Prostate gland (tissue), 2 donors: ENCODE measurements at regions of chr16 and their contacts with region 1.

Region 1: DNA sequence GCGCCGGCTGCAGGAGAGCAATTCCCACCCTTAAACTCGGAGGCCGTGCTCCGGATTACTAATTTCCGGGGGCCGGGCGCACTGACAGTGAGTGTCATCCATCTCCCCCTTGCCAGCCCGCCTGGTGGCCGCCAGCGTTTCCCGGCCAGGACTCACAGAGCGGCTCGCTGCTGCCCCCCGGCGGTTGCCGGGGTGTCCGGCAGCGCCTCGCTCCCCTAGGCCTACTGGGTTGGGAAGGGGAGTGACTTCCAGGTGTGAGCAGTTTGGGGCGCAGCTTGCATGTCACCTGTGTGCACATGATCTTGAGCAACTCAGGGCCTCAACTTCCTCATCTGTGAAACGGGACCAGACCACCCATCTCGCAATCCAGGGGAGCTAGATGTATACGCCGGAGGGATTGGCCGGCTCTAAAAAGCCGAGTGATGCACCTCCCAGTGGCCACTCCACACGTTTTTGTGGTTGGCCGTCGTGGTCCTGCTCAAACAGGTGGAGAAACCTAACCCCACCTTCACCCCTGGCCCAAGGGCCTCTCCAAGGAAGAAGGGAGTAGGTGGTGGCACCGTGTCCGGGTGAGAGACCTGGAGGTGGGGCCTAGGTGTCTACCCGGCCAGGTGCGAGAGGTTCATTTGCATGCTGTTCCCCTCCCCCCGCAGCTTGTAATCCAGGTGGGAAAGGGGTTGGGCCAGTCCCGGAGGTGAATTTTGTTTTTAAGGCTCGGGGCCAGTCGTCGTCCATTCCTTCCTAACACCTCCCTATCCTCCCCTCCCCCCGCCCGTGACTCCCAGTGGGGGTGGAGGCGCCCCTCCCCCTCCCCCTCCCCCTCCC is 2.4 kb upstream of the GSE1 start:
- DNase-seq: peak; percentile 83
- H3K4me3 ChIP-seq: peak overlapping the region; percentile 58 to 68
- H3K27ac ChIP-seq: peak overlapping the region; percentile 95
- H3K4me1 ChIP-seq: peaks cover 41% of the 10 kb centered on the region
- H3K27me3 ChIP-seq: no peaks in the 10 kb centered on the region
- CTCF ChIP-seq: peak; percentile 99
- POLR2A ChIP-seq: no peak

Region 2: DNA sequence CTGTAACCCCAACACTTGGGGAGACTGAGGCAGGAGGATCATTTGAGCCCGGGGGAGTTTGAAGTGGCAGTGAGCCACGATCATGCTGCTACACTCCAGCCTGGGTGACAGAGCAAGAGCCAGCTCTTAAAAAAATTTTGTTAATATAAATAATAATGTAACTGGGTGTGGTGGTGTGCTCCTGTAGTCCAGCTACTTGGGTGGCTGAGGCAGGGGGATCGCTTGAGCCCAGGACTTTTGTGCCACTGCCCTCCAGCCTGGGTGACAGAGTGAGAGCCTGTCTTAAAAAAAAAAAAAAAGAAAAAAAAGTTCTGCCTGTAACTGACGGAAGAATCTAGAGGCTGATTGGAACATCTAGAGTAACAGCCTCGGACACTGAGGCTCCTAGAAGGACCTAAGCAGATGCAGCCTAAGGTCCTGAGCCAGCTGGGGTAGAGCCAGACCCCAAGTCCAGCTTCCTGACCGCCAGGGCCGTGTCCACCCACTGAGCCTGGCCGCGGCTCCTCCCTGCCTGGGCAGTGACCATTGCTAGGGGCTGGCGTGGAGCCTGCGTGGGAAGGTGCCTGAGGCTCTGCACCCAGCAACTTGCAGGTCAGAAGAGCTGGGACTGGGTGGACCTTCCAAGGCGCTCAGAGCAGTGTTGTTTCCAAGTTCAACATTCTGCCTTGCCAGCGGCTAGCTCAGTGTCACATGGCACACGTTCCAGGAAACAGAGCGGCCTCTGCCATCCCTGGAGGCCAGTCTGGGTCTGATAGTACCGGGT is 289.0 kb before region 1 on chr16:
- intact Hi-C with region 1: loop called (anchors 5 kb)
- DNase-seq: peak; percentile 87
- H3K4me3 ChIP-seq: no peak overlapping the region
- H3K27ac ChIP-seq: peak overlapping the region; percentile 77 to 84
- H3K4me1 ChIP-seq: peaks cover 11% of the 10 kb centered on the region
- H3K27me3 ChIP-seq: no peaks in the 10 kb centered on the region
- CTCF ChIP-seq: no peak
- POLR2A ChIP-seq: no peak

Region 3: DNA sequence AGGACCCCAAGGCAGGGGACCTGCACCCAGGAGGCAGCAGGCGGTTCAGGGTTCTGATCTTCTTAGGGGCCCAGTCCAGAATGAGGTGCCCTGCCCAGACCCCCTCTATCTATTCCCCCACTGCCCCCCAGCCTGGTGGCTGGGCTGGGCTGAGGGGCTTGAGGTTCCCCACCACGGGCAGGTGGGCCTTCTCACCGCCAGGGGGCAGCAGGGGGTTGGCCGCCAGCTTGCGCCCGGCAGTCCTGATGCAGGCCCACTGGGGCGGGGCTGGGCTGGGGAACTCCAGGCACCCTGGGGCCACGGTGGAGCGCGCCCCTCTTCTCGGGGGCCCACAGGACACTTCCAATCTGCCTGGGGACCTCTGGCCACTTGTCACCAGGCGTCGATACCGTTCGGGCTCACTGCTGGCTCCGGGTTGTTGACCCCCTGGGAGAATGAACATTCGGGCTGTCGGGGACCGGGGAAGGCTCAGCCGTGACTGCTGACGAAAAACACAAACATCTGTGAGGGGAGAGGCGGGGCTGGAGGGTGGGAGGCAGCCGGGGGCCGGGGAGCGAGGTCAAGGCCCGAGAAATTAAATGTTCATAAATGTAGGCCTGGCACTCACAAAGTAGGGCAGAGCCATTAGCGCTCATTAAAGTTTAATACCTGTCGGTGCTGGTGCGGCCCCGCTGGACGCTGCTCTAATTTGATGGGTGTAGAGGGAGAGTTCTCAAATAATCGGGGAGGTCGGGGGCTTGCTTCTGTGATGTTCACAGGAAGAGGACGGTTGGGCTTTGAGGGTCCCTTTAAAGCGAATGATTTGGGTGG is 216.8 kb before region 1 on chr16:
- intact Hi-C with region 1: loop called (anchors 10 kb)
- DNase-seq: no peak
- H3K4me3 ChIP-seq: no peak overlapping the region
- H3K27ac ChIP-seq: peak overlapping the region in 1 of 2 donors; percentile 22
- H3K4me1 ChIP-seq: peaks cover 8% of the 10 kb centered on the region
- H3K27me3 ChIP-seq: no peaks in the 10 kb centered on the region
- CTCF ChIP-seq: peak; percentile 56 to 70 (median 59)
- POLR2A ChIP-seq: no peak

Region 4: GRCh38 chr16:85420501-85421337 is 190.0 kb before region 1 on chr16:
- intact Hi-C with region 1: loop called (anchors 2 kb)
- DNase-seq: no peak
- H3K4me3 ChIP-seq: no peak overlapping the region
- H3K27ac ChIP-seq: no peak overlapping the region
- H3K4me1 ChIP-seq: peaks cover 2% of the 10 kb centered on the region
- H3K27me3 ChIP-seq: no peaks in the 10 kb centered on the region
- CTCF ChIP-seq: peak; percentile 83 to 97 (median 94)
- POLR2A ChIP-seq: no peak

Region 5: DNA sequence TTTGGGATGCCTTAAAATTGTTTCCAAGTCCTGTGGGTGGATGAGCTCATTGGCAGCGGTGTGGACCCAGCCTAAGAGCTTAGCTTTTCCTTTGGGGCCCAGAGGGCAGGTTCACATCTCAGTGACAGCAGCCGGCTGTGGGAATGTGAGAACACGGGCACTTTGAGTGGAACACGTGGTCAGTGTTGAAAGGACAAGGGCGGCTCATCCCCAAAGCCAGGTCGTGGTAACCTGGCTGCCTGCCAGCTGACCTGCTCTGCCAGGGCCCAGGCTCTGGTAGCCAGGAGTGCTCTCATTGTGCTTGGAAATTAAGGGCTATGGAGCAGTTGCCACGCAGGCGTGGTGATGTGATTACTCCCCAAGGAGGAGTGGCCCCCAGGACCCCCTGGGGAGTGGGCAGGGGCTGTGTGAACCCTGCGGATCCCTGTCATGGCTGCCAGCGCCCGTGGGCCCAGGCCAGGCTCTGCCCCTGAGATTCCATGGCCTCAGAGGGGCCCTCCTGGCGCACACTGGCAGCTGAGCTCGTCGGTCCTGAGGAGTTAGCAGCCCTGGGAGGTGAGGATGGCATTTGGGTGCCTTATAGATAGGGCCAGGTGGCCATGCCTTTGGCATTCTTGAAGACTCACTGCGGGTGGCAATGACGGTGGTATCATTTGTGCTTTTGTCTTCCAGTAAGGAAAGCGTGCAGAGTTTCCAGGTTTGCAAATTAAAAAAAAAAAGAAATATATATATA is 144.6 kb before region 1 on chr16:
- intact Hi-C with region 1: loop called (anchors 5 kb)
- DNase-seq: no peak
- H3K4me3 ChIP-seq: no peak overlapping the region
- H3K27ac ChIP-seq: peak overlapping the region in 1 of 2 donors; percentile 23
- H3K4me1 ChIP-seq: peaks cover 3% of the 10 kb centered on the region
- H3K27me3 ChIP-seq: no peaks in the 10 kb centered on the region
- CTCF ChIP-seq: no peak
- POLR2A ChIP-seq: no peak

Region 6: DNA sequence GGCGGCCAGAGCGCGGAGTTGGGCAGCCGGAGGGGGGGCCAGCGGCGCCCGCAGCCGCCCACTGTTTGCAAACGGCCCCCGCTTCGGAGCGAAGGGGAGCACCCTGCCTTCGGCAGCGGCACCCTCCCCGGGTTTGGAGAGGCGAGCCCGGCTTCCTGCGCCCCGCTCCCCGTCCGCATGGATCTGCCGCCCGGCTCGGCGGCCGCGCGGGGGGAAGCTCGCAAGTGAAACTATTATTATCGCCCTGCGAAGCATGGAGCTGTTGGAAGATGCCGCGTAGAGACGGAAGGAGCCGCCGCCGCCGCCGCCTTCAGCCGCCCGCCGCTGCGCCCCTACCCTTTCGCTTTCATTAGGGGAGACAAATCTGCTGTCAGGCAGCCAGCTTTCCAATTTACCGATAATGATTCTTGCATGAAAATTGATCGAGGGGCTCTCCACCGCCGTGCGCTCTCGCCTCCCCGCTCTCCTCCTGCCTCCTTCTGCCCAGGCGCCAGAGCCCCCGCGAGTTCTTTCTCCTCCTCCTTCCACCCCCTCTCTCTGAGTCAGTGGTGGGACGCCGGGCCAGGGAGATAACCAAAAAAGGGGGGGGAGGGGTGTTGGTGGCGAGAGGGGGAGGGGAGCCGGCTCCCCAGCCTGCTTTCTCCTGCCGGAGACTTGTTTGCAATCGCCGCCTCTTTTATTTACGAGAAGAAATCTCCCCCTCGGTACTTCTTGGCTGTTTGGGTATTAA is 55.7 kb before region 1 on chr16:
- intact Hi-C with region 1: loop called (anchors 5 kb)
- DNase-seq: peak; percentile 38
- H3K4me3 ChIP-seq: peak overlapping the region; percentile 60 to 66
- H3K27ac ChIP-seq: peak overlapping the region; percentile 81 to 83
- H3K4me1 ChIP-seq: peaks cover 18% of the 10 kb centered on the region
- H3K27me3 ChIP-seq: no peaks in the 10 kb centered on the region
- CTCF ChIP-seq: no peak
- POLR2A ChIP-seq: peak; percentile 32

Region 7: DNA sequence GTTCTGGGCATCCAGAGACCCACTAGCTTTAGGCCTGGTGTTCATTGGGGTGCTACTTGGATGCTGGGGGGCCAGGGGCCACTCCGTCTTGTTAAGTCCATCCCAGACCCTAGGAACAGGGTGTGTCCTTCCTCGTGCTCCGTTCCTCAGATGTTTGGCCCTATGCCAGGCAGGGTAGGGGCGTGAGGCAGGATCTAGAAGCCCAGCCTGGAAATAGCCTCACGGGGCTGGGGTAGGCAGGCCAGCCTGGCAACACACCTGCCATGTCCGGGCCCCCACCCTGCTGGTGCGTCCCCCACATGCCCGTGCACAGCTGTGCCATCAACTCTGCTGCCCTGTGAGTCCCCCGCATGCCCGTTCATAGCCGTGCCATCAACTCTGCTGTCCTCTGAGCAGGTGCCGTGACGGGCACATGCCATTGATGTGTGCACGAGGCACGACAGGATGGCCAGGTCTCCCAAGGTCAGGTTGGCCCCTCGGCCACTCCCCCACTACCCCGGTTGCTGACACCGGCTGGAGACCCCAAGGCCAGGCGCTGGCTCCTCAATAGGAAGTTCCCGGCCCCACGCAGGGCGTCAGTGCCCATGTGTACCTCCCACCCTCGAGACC is 41.2 kb after region 1 on chr16:
- intact Hi-C with region 1: no loop called
- DNase-seq: no peak
- H3K4me3 ChIP-seq: no peak overlapping the region
- H3K27ac ChIP-seq: peak overlapping the region in 1 of 2 donors; percentile 65
- H3K4me1 ChIP-seq: peaks cover 23% of the 10 kb centered on the region
- H3K27me3 ChIP-seq: no peaks in the 10 kb centered on the region
- CTCF ChIP-seq: no peak
- POLR2A ChIP-seq: no peak

Region 8: GRCh38 chr16:86044241-86044671 is 433.5 kb after region 1 on chr16:
- intact Hi-C with region 1: no loop called
- DNase-seq: no peak
- H3K4me3 ChIP-seq: no peak overlapping the region
- H3K27ac ChIP-seq: no peak overlapping the region
- H3K4me1 ChIP-seq: no peaks in the 10 kb centered on the region
- H3K27me3 ChIP-seq: peaks cover 12% of the 10 kb centered on the region
- CTCF ChIP-seq: peak in 1 of 4 experiments; percentile 20
- POLR2A ChIP-seq: no peak